ENCODE measurements at regions of chr7 and their contacts with region 1.

Region 1: DNA sequence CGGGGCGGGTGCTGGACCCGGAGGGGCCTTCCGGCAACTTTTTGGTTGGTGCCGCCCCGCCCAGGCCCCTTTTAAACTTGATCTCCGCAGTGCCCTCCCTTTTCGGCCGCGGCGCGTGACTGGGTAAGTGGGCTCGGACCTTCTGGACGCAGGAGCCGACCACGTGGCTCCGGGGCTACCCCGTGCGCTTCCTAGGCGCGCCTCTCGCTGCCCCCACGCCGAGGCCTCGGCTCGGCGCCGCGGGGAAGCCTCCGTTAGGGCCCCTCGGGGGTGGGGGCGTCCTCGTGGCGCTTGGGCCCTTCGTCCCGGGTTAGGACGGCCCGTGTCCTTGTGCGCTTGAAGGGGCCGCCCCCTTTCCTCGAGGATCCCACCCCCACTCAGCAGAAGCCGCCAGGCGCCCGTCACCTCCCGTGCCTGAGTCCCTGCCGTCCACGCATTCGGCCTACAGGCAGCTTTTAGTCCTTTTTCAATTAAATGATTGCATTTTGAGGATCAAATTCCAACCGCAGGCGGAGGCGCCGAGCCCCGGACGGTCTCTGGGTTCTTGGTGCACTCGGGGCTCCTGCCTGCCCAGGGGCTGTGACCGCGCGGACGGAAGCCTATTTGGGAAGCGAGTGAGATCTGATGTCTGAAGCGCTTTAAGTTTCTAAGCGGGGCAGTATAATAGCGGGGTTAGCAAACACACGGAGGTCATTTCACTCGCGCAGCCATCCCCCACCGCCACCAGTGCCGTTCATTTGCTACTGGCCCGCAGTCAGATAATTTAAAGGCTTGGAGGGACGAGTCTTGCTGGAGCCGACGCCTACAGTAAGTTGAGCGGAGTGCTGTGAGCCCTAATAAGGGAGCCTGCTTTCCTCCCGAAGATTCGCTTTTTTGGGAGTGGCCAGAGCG is 31.8 kb upstream of the TOMM7 start:
- DNase-seq: peak; percentile 84
- ATAC-seq: peak; percentile 81
- H3K4me3 Mint-ChIP-seq: peak overlapping the region; percentile 96
- H3K27ac Mint-ChIP-seq: peak overlapping the region; percentile 91
- H3K4me1 Mint-ChIP-seq: peaks cover 54% of the 10 kb centered on the region
- H3K27me3 Mint-ChIP-seq: no peaks in the 10 kb centered on the region
- CTCF ChIP-seq: no peak

Region 2: DNA sequence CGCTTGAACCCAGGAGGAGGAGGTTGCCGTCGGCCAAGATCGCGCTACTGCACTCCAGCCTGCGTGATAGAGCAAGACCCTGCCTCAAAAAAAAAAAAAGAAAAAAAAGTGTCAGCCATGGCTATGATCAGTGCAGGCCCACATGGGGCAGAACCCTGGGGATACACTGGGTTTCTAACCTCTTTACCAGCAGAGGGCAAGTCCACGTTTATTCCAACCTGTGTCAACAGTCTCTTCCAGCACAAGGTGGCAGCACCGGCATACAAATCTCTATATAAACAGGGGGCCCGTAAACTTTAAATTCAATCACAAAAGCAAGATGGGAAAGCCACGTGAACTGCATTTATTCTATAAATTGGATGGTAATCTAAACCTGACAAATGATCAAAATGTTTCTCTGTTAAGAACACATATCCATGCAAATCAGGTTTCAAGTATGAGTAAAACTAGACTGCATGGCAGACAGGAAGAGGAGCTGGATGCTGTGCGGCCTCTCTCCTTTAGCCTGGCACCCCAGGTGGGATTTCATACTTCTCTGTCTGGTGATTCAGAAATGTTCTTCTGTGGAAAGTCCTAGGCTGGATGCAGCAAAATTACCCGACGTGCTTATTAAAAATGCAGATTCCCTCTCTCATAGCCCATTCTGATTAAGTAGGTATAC is 294.4 kb before region 1 on chr7:
- CTCF ChIA-PET with region 1: interaction called, 3 read pairs
- POLR2A ChIA-PET with region 1: no interaction called
- intact Hi-C with region 1: loop called (anchors 1 kb)
- DNase-seq: peak; percentile 43
- ATAC-seq: peak; percentile 80
- H3K4me3 Mint-ChIP-seq: peak overlapping the region; percentile 36
- H3K27ac Mint-ChIP-seq: peak overlapping the region; percentile 70
- H3K4me1 Mint-ChIP-seq: peaks cover 50% of the 10 kb centered on the region
- H3K27me3 Mint-ChIP-seq: no peaks in the 10 kb centered on the region
- CTCF ChIP-seq: peak; percentile 24

Region 3: GRCh38 chr7:22833957-22834356 is 20.4 kb before region 1 on chr7:
- CTCF ChIA-PET with region 1: no interaction called
- POLR2A ChIA-PET with region 1: no interaction called
- intact Hi-C with region 1: loop called (anchors 2 kb)
- DNase-seq: no peak
- ATAC-seq: no peak
- H3K4me3 Mint-ChIP-seq: no peak overlapping the region
- H3K27ac Mint-ChIP-seq: no peak overlapping the region
- H3K4me1 Mint-ChIP-seq: no peaks in the 10 kb centered on the region
- H3K27me3 Mint-ChIP-seq: no peaks in the 10 kb centered on the region
- CTCF ChIP-seq: no peak

Region 4: GRCh38 chr7:22885797-22886261 is 31.4 kb after region 1 on chr7:
- CTCF ChIA-PET with region 1: no interaction called
- POLR2A ChIA-PET with region 1: interaction called, 11 read pairs
- intact Hi-C with region 1: loop called (anchors 1 kb)
- DNase-seq: no peak
- ATAC-seq: peak; percentile 84
- H3K4me3 Mint-ChIP-seq: peak overlapping the region; percentile 39
- H3K27ac Mint-ChIP-seq: peak overlapping the region; percentile 84
- H3K4me1 Mint-ChIP-seq: peaks cover 18% of the 10 kb centered on the region
- H3K27me3 Mint-ChIP-seq: no peaks in the 10 kb centered on the region
- CTCF ChIP-seq: no peak

Region 5: GRCh38 chr7:23000597-23001360 is 146.4 kb after region 1 on chr7:
- CTCF ChIA-PET with region 1: no interaction called
- POLR2A ChIA-PET with region 1: no interaction called
- intact Hi-C with region 1: no loop called
- DNase-seq: no peak
- ATAC-seq: no peak
- H3K4me3 Mint-ChIP-seq: no peak overlapping the region
- H3K27ac Mint-ChIP-seq: no peak overlapping the region
- H3K4me1 Mint-ChIP-seq: peaks cover 63% of the 10 kb centered on the region
- H3K27me3 Mint-ChIP-seq: no peaks in the 10 kb centered on the region
- CTCF ChIP-seq: no peak

Region 6: GRCh38 chr7:23055582-23056178 is 201.3 kb after region 1 on chr7:
- CTCF ChIA-PET with region 1: interaction called, 27 read pairs
- POLR2A ChIA-PET with region 1: interaction called, 3 read pairs
- intact Hi-C with region 1: loop called (anchors 1 kb)
- DNase-seq: no peak
- ATAC-seq: peak; percentile 99
- H3K4me3 Mint-ChIP-seq: no peak overlapping the region
- H3K27ac Mint-ChIP-seq: no peak overlapping the region
- H3K4me1 Mint-ChIP-seq: no peaks in the 10 kb centered on the region
- H3K27me3 Mint-ChIP-seq: no peaks in the 10 kb centered on the region
- CTCF ChIP-seq: peak; percentile 80

Region 7: GRCh38 chr7:23181684-23182553 is 327.5 kb after region 1 on chr7 and contains the start of gene NUP42:
- CTCF ChIA-PET with region 1: no interaction called
- POLR2A ChIA-PET with region 1: no interaction called
- intact Hi-C with region 1: loop called (anchors 2 kb)
- DNase-seq: peak; percentile 90
- ATAC-seq: peak; percentile 90
- H3K4me3 Mint-ChIP-seq: peak within 1 kb of the TSS; percentile 94
- H3K27ac Mint-ChIP-seq: peak within 1 kb of the TSS; percentile 100
- H3K4me1 Mint-ChIP-seq: peaks cover 28% of the 10 kb centered on the region
- H3K27me3 Mint-ChIP-seq: no peaks in the 10 kb centered on the region
- CTCF ChIP-seq: no peak
- total RNA-seq, gene NUP42: 39.2 and 50.6 TPM in 2 replicates

Measured in activated B cell treated with CpG ODN at 0.5 μM for 24 hours (primary cell).